Right ventricle myocardium inferior (tissue), 1 donor: ENCODE measurements at regions of chr12 and their contacts with region 1.

Region 1: DNA sequence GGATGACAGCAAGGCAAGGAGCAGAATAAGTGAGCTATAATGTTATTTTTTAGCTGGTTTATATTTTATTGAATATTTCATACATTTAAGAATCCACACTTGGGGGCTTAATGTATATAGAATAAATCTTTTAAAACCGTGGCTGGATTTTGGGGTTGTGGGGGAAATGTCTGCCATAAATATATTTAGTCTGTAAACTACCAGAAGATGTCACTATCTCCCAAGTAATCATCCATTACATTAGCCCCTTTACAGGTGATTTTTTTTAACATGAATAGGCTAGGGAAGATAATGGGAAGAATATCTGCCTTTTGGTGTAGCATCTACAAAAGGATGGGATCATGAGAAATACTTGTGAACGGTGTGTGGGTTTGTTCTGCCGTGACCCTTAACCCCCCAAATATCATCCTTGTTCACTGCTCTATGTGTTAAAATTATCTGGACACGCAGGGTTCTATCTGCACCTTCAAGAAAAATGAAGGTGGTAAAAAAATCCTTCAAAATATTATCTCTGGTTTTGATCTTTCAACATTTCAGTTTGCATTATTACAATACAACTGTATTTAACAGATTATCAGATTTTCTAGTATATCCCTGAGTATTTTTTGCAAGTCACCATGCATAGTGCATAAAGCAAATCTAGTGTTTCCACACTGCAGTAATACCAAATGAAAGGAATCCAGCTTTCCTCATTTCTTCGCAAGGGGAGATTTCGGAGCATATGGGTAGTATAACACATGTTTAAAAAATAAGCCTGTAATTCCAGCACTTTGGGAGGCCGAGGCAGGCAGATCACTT is 8.0 kb upstream of the SLC17A8 start:
- DNase-seq: no peak
- ATAC-seq: no peak

Region 2: GRCh38 chr12:100404769-100405407 is 56.0 kb after region 1 on chr12:
- intact Hi-C with region 1: loop called (anchors 2 kb)
- DNase-seq: no peak
- ATAC-seq: no peak

Region 3: GRCh38 chr12:100554608-100555077 is 205.8 kb after region 1 on chr12:
- intact Hi-C with region 1: loop called (anchors 2 kb)
- DNase-seq: no peak
- ATAC-seq: peak; percentile 73

Region 4: GRCh38 chr12:100733817-100734593 is 385.1 kb after region 1 on chr12:
- intact Hi-C with region 1: loop called (anchors 5 kb)
- DNase-seq: no peak
- ATAC-seq: no peak